A673 (cell line): ENCODE measurements at regions of chr11 and their contacts with region 1.

Region 1: GRCh38 chr11:85844426-85845129 is 10.6 kb upstream of the CCDC83 start:
- DNase-seq: no peak
- H3K4me3 ChIP-seq: no peak overlapping the region
- H3K27ac ChIP-seq: no peak overlapping the region
- H3K4me1 ChIP-seq: no peaks in the 10 kb centered on the region
- H3K27me3 ChIP-seq: no peaks in the 10 kb centered on the region
- CTCF ChIP-seq: no peak

Region 2: DNA sequence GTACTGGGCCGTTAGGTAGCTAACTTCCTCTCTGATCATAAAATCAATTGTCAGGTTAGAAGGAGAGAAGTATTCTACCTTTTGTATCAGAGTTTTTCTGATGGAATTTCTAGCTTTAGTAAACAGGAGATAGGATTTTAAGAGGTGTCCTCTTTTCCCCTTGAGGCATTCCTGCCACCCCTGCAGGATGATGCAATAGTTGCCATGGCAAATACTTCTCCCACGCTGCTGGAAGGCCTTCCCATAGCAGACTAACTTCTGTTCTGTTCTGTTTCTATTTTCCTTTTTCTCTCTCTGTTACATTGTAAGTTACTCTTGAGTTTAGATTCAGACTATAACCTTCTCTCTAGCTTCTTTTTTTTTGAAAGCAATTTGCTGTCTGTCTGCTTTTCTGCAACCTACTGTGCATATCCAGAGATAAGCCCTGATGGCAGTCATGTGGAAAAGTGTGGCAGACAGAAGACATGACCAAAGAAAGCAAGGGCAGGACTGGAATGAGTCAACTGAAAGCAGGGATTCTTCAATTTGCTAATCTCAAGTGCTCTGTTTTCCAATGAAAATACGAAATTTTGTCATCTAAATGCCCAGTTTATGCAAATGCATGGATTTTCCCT is 896.5 kb before region 1 on chr11:
- CTCF ChIA-PET with region 1: no interaction called
- POLR2A ChIA-PET with region 1: no interaction called
- intact Hi-C with region 1: no loop called
- DNase-seq: peak; percentile 22
- H3K4me3 ChIP-seq: no peak overlapping the region
- H3K27ac ChIP-seq: no peak overlapping the region
- H3K4me1 ChIP-seq: no peaks in the 10 kb centered on the region
- H3K27me3 ChIP-seq: no peaks in the 10 kb centered on the region
- CTCF ChIP-seq: no peak

Region 3: GRCh38 chr11:85699957-85700741 is 144.4 kb before region 1 on chr11:
- CTCF ChIA-PET with region 1: no interaction called
- POLR2A ChIA-PET with region 1: no interaction called
- intact Hi-C with region 1: loop called (anchors 5 kb)
- DNase-seq: no peak
- H3K4me3 ChIP-seq: no peak overlapping the region
- H3K27ac ChIP-seq: no peak overlapping the region
- H3K4me1 ChIP-seq: no peaks in the 10 kb centered on the region
- H3K27me3 ChIP-seq: peaks cover 45% of the 10 kb centered on the region
- CTCF ChIP-seq: no peak

Region 4: GRCh38 chr11:85805387-85805786 is 39.2 kb before region 1 on chr11:
- CTCF ChIA-PET with region 1: no interaction called
- POLR2A ChIA-PET with region 1: no interaction called
- intact Hi-C with region 1: no loop called
- DNase-seq: no peak
- H3K4me3 ChIP-seq: no peak overlapping the region
- H3K27ac ChIP-seq: no peak overlapping the region
- H3K4me1 ChIP-seq: no peaks in the 10 kb centered on the region
- H3K27me3 ChIP-seq: peaks cover 22% of the 10 kb centered on the region
- CTCF ChIP-seq: no peak